GM12878 (cell line): ENCODE measurements at regions of chr2 and their contacts with region 1.

Region 1: DNA sequence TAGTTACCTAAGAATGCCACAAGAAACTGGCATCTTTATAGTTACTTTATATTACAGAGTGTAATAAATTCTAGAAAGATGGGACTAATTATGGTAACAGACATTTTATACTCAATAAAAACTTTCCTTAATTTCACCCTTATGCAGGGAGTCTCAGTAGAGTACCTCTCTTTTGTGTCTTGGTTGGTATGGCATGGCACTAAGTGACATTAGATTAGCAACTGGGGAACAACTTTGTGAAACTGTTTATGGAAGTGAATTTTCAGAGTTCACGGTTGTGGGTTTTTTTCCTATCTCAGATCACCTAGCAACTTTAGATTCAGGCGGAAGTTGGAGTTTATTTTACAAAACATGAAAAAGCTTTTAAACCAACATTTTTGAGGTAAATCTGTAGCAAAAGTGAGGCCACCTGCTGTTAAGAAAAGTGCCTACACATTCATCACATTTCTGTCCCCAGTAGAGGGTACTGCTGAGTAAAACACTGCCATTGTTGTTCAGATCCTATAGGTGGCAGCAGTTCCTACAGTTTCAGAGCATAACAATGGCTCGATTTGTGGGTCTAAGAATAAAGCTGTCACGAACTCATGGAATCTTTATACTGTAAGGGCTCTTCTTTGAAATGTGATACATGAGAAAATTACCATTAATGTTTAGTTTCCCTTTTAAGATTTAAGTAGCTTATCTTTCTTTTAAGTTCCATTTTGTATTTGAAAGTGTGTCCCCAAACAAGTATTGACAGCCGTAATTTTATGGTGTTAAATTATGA is 117.6 kb downstream of the CAMKMT start:
- DNase-seq: peak; percentile 61
- ATAC-seq: peak; percentile 100
- H3K4me3 ChIP-seq: no peak overlapping the region
- H3K27ac ChIP-seq: no peak overlapping the region
- H3K4me1 ChIP-seq: no peaks in the 10 kb centered on the region
- H3K27me3 ChIP-seq: no peaks in the 10 kb centered on the region
- CTCF ChIP-seq: peak; percentile 98 to 100 (median 100); a peak in 5 of 6 replicates
- EP300 ChIP-seq: no peak
- POLR2A ChIP-seq: no peak
- RAD21 ChIP-seq: peak; percentile 99

Region 2: DNA sequence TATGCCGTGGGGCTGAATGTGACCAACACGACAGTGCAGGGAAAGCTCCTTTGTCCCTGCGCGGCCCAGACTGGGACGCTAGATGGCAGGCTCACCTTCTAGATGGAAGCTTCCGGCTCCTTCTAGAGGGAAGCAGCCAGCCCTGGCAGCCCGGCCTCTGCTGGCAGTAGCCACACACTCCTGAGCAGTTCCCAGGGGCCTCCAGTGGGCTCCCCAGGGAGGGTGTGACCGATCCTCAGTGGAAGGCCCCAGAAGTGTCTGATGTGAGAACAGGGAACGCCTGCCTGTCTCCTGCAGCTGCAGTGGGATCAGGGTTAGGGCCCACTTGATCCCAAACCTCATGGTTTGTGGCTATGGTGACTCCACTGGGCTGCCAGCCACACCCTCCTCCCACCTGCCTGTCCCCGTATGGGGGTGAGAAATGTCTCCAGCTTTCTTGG is 435.0 kb before region 1 on chr2:
- CTCF ChIA-PET with region 1: interaction called, 32 read pairs
- POLR2A ChIA-PET with region 1: no interaction called
- RAD21 ChIA-PET with region 1: interaction called, 27 read pairs
- SMC1A ChIA-PET with region 1: interaction called, 5 read pairs
- in situ Hi-C with region 1: loop called (anchors 5 kb)
- intact Hi-C with region 1: loop called (anchors 1 kb)
- DNase-seq: peak; percentile 44
- ATAC-seq: peak; percentile 100
- H3K4me3 ChIP-seq: no peak overlapping the region
- H3K27ac ChIP-seq: no peak overlapping the region
- H3K4me1 ChIP-seq: peaks cover 5% of the 10 kb centered on the region
- H3K27me3 ChIP-seq: no peaks in the 10 kb centered on the region
- CTCF ChIP-seq: peak; percentile 94 to 98 (median 94); a peak in 5 of 6 replicates
- EP300 ChIP-seq: no peak; a peak in 1 of 4 replicates
- POLR2A ChIP-seq: no peak
- RAD21 ChIP-seq: peak; percentile 92

Region 3: DNA sequence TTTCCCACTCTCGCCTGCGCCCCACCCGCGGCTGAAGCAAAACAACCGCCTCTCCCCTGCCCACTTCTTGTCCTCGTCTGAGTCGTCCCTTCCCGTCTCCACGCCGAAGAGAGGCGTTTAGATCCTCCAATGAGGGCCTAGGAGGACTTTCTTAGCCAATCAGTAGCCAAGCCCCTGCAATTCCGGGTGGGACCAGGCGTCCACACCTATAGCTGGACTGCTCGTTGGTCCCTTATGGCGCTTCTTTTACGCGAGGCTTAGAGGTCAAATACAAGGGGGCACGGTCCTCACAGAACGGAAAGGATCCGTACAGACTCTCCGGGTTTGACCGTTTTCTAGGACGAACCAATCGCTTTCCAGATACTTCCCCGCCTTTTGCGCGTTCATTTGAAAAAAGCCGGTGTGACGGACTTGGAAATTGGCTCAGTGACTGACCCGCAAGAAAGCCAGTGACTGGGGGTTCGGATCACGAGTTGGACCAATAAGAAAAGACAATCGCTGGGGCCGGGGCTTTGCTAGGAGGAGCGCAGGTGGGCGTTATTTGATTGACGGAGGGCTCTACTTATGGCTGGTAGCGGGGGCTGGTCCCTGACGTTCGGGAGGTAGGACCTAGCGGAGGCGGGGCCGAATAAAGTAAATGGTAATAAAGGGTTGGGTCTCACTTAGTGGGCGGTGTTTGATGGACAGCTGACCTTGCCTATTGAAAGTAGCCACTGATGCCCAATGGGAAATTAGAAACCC is 311.2 kb before region 1 on chr2:
- CTCF ChIA-PET with region 1: no interaction called
- POLR2A ChIA-PET with region 1: no interaction called
- RAD21 ChIA-PET with region 1: no interaction called
- SMC1A ChIA-PET with region 1: no interaction called
- in situ Hi-C with region 1: no loop called
- intact Hi-C with region 1: no loop called
- DNase-seq: peak; percentile 98
- ATAC-seq: peak; percentile 83
- H3K4me3 ChIP-seq: peak overlapping the region; percentile 59
- H3K27ac ChIP-seq: peak overlapping the region; percentile 92
- H3K4me1 ChIP-seq: no peaks in the 10 kb centered on the region
- H3K27me3 ChIP-seq: no peaks in the 10 kb centered on the region
- CTCF ChIP-seq: no peak
- EP300 ChIP-seq: no peak
- POLR2A ChIP-seq: peak; percentile 80
- RAD21 ChIP-seq: no peak

Region 4: GRCh38 chr2:44490726-44491125 is 11.4 kb after region 1 on chr2:
- CTCF ChIA-PET with region 1: interaction called, 24 read pairs
- POLR2A ChIA-PET with region 1: interaction called, 3 read pairs
- RAD21 ChIA-PET with region 1: no interaction called
- SMC1A ChIA-PET with region 1: interaction called, 8 read pairs
- in situ Hi-C with region 1: no loop called
- intact Hi-C with region 1: no loop called
- DNase-seq: no peak
- ATAC-seq: no peak
- H3K4me3 ChIP-seq: no peak overlapping the region
- H3K27ac ChIP-seq: no peak overlapping the region
- H3K4me1 ChIP-seq: no peaks in the 10 kb centered on the region
- H3K27me3 ChIP-seq: no peaks in the 10 kb centered on the region
- CTCF ChIP-seq: no peak
- EP300 ChIP-seq: no peak
- POLR2A ChIP-seq: no peak
- RAD21 ChIP-seq: no peak

Region 5: DNA sequence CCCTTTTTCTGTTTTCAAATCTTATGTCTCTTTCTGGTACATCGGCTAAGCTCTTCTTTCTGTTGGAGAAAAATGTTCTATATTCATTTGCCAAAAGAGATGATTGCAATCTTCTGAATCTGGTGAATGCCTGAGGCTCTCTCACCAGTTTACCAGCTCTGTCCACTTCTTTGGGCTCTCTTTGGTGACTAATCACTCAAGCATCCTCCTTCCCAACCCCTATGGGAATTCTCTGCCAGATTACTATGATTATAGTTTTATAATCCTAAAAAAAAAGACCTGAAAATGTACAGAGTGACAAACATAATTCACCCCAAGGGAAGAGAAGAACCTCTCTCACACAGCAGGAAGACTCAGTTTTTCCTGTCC is 69.8 kb after region 1 on chr2:
- CTCF ChIA-PET with region 1: interaction called, 22 read pairs
- POLR2A ChIA-PET with region 1: no interaction called
- RAD21 ChIA-PET with region 1: interaction called, 10 read pairs
- SMC1A ChIA-PET with region 1: interaction called, 20 read pairs
- in situ Hi-C with region 1: no loop called
- intact Hi-C with region 1: no loop called
- DNase-seq: no peak
- ATAC-seq: no peak
- H3K4me3 ChIP-seq: no peak overlapping the region
- H3K27ac ChIP-seq: no peak overlapping the region
- H3K4me1 ChIP-seq: peaks cover 5% of the 10 kb centered on the region
- H3K27me3 ChIP-seq: no peaks in the 10 kb centered on the region
- CTCF ChIP-seq: no peak
- EP300 ChIP-seq: no peak
- POLR2A ChIP-seq: no peak
- RAD21 ChIP-seq: no peak

Region 6: GRCh38 chr2:44668336-44668735 is 189.0 kb after region 1 on chr2:
- CTCF ChIA-PET with region 1: interaction called, 156 read pairs
- POLR2A ChIA-PET with region 1: no interaction called
- RAD21 ChIA-PET with region 1: interaction called, 62 read pairs
- SMC1A ChIA-PET with region 1: interaction called, 102 read pairs
- in situ Hi-C with region 1: no loop called
- intact Hi-C with region 1: loop called (anchors 1 kb)
- DNase-seq: no peak
- ATAC-seq: peak; percentile 73
- H3K4me3 ChIP-seq: no peak overlapping the region
- H3K27ac ChIP-seq: no peak overlapping the region
- H3K4me1 ChIP-seq: no peaks in the 10 kb centered on the region
- H3K27me3 ChIP-seq: no peaks in the 10 kb centered on the region
- CTCF ChIP-seq: peak; percentile 38 to 55 (median 47); a peak in 5 of 6 replicates
- EP300 ChIP-seq: no peak
- POLR2A ChIP-seq: no peak
- RAD21 ChIP-seq: peak; percentile 64

Region 7: DNA sequence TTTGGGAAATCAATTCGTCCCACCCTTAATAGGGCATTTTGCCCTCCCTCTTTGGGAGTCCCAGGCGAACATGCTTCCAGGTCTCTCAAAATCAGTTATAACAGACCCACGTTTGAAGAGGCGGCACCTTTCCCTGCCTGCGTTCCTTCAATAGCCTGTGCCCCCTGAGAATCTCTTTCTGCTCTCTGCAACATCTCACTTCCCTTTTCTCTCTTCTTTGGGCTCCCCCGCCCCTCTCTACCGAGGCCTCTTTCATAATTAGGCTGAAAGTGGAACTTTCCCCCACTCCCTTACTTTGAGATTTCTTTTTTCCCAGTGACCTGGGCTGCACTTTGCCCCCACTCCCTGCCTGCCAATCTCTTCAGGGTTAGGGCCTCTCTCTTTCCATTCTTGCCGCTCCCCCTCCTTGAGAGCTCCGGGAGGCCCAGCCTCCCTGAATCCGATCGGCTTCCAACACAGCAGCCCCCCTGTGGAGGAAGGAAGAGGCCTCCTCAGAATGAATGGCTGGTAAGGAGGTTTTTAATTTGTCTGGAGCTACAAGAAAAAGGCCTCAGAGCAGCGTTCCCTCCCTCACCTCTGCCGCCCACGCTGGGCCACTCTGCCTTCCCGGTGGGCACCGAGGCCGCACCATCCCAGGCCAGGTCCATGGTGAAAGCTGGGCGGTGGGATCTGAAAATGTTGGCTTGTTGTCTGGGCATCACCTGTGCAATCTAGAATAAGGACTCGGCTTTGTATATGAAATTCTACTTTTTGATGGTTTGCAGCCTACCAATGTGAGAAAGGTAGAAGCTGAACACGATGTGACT is 299.6 kb after region 1 on chr2:
- CTCF ChIA-PET with region 1: interaction called, 12 read pairs
- POLR2A ChIA-PET with region 1: no interaction called
- RAD21 ChIA-PET with region 1: interaction called, 3 read pairs
- SMC1A ChIA-PET with region 1: interaction called, 17 read pairs
- in situ Hi-C with region 1: no loop called
- intact Hi-C with region 1: no loop called
- DNase-seq: peak; percentile 73
- ATAC-seq: peak; percentile 96
- H3K4me3 ChIP-seq: peak overlapping the region; percentile 78
- H3K27ac ChIP-seq: peak overlapping the region; percentile 72
- H3K4me1 ChIP-seq: peaks cover 25% of the 10 kb centered on the region
- H3K27me3 ChIP-seq: no peaks in the 10 kb centered on the region
- CTCF ChIP-seq: 0 out of 6 replicates have a peak, but pooled peaks of 1 of the 3 experiments have one; percentile 0
- EP300 ChIP-seq: peak; percentile 35 to 75; a peak in 2 of 4 replicates
- POLR2A ChIP-seq: no peak
- RAD21 ChIP-seq: 0 out of 2 replicates have a peak, but pooled peaks have one; percentile 12

Region 8: DNA sequence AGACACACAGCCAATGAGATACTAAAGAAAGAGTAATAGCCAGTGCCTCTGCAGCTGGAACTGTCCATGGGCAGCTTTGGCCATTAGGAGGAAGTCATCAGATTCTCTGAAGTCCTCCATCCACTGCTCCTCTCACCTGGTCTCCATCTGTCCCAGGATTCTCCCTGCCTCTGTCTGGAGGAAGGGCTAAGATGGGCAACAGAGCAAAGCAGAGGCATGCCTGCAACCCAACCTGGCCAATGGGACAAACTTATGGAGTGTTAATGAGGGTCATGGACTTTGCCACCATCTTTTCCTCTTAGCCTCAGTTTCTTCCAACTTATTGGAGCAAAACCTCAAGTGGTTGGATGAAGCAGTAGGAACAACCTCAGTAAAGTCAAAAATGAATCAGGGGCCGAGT is 370.7 kb after region 1 on chr2:
- CTCF ChIA-PET with region 1: no interaction called
- POLR2A ChIA-PET with region 1: no interaction called
- RAD21 ChIA-PET with region 1: no interaction called
- SMC1A ChIA-PET with region 1: no interaction called
- in situ Hi-C with region 1: no loop called
- intact Hi-C with region 1: no loop called
- DNase-seq: no peak
- ATAC-seq: no peak
- H3K4me3 ChIP-seq: no peak overlapping the region
- H3K27ac ChIP-seq: no peak overlapping the region
- H3K4me1 ChIP-seq: no peaks in the 10 kb centered on the region
- H3K27me3 ChIP-seq: no peaks in the 10 kb centered on the region
- CTCF ChIP-seq: no peak
- EP300 ChIP-seq: no peak
- POLR2A ChIP-seq: no peak
- RAD21 ChIP-seq: no peak